ENCODE measurements at regions of chr9 and their contacts with region 1.

Region 1: GRCh38 chr9:127199001-127199791 is 65.4 kb upstream of the GARNL3 start:
- DNase-seq: peak; percentile 87
- H3K4me3 ChIP-seq: no peak overlapping the region
- H3K27ac ChIP-seq: peak overlapping the region in 5 of 8 donors; percentile 40 to 67 (median 58)
- H3K4me1 ChIP-seq: peaks cover 7 to 25% (median 16%) of the 10 kb centered on the region in 6 donors
- H3K27me3 ChIP-seq: no peaks in the 10 kb centered on the region
- CTCF ChIP-seq: peak; percentile 76 to 98 (median 90)
- POLR2A ChIP-seq: no peak

Region 2: DNA sequence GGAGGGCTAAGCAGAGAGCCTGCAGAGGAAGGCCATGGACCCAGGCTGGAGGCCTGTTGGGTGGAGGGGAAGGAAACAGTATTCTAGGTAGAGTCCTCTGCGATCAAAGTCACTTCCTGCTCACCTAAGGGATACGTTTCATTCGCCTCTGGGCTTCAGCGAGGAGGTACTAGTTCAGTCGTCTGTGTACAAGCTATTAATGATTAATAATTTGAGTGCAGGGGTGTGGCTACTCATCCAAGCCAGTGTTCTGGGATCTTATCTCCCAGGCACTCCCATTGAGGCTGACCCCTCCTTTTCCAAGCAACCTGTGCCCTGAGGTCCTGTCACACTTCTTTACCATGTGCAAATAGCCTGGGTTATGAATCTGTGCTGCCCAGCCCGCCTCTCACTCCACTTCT is 259.4 kb before region 1 on chr9:
- intact Hi-C with region 1: loop called (anchors 2 kb)
- DNase-seq: no peak
- H3K4me3 ChIP-seq: no peak overlapping the region
- H3K27ac ChIP-seq: no peak overlapping the region
- H3K4me1 ChIP-seq: peaks cover 0 to 11% (median 6%) of the 10 kb centered on the region in 6 donors
- H3K27me3 ChIP-seq: no peaks in the 10 kb centered on the region
- CTCF ChIP-seq: no peak
- POLR2A ChIP-seq: no peak

Measured in spleen (tissue), 13 donors.